ENCODE measurements at regions of chr11 and their contacts with region 1.

Region 1: GRCh38 chr11:103682318-103683184 is 353.9 kb upstream of the DDI1 start:
- DNase-seq: peak; percentile 36
- CTCF ChIP-seq: peak; percentile 77

Region 2: GRCh38 chr11:103671143-103671651 is 11.4 kb before region 1 on chr11:
- CTCF ChIA-PET with region 1: interaction called, 28 read pairs
- POLR2A ChIA-PET with region 1: no interaction called
- DNase-seq: no peak
- CTCF ChIP-seq: no peak

Region 3: DNA sequence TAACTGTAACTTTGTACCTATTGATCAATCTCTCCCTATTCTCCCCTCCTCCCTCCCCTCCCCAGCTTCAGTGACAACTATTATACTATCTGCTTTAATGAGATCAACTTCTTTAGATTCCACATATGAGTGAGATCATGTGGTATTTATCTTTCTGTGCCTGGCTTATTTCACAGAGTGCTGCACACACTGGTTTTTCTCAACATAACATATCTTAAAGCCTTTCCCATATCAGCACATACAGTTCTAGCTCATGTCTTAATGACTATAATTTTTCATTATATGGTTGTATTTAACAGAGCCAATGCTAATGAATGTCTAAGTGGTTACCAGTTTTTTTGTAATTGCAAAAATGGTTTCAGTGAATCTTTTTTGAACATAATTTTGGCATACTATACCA is 13.6 kb after region 1 on chr11:
- CTCF ChIA-PET with region 1: interaction called, 36 read pairs
- POLR2A ChIA-PET with region 1: no interaction called
- DNase-seq: no peak
- CTCF ChIP-seq: no peak

Region 4: DNA sequence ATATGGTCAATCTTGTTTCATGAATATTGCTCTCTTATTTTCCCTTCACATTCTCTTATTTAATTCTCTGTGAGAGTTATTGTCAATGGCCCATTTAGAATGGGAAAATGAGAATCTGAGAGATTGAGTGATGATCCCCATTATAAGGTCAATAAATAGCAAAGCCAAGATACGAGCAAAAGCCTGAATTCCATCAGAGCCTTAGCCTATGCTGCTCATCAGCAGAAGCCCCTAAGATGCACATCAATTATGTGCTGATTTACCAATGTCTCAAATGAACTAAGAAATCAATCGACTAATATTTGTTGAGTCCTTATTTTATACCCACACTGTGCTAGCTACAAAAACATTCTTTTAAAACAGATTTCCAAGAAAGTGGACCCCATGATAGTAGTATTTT is 23.1 kb after region 1 on chr11:
- CTCF ChIA-PET with region 1: interaction called, 11 read pairs
- POLR2A ChIA-PET with region 1: no interaction called
- DNase-seq: no peak
- CTCF ChIP-seq: no peak

Region 5: DNA sequence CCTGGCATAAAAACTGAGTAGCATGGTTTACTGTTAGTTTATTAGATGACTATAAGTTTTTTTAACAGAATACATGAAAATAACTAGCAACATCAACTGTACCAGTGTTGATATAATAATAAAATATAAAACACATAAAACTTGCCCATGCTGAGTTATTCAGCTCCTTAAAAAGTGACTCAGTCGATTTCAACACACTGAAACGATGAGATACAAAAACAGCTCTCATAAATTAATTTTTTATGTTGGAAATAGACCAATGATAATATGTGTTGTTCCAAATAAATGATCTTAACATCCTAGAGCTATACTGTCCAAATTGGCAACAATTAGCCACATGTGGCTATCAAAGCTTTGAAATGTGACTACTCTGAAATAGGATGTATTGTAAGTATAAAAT is 465.5 kb after region 1 on chr11:
- CTCF ChIA-PET with region 1: interaction called, 14 read pairs
- POLR2A ChIA-PET with region 1: no interaction called
- DNase-seq: no peak
- CTCF ChIP-seq: no peak